A549 (cell line): ENCODE measurements at regions of chr2 and their contacts with region 1.

Region 1: DNA sequence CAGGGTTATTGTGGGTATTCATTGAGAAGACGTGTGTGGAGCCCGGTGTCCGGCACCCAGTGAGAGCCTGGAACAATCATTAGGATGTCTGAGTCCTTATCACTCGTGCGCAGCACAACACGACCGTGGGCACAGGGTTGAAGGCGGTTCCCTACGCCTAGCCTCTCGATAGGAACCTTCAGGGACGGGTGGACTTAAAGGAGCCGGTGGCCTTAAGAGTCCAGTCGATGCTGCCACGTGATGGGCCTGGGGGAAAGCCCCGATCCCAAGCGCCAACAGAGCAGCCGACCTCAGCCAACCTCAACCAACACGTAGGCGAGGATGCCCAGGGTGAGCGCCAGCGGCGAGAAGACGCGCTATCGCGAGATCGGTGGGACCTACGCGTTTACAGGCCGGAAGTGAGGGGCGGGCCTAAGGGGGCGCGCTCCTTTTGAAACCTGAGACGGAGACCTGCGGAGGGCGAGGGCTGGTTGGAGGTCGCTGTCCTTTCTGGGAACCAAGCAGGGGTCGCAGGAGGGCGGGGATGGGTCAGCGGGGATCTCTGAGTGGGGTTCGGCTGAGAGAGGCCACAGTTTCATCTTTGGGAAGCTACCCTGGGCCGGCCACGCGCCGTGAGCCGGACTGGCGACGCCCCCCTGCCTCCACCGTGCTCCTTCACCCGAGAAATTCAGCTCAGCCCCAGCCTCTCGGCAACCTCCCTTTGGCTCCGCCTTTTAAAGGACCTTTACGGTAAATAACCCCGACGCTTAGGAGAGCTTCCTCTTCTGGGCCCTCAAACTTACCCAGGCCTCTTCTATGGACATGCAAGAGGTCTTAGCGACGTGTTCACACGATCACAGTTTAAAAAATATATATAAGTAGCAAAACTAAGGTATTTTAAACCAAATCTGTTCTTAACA is 28.3 kb downstream of the WNT10A start:
- DNase-seq: peak; percentile 91 to 97
- ATAC-seq: peak; percentile 97 to 98
- H3K4me3 ChIP-seq: peak overlapping the region; percentile 51
- H3K27ac ChIP-seq: peak overlapping the region; percentile 67 to 88
- H3K4me1 ChIP-seq: 0 out of 3 replicates have a peak, but pooled peaks cover 3% of the 10 kb centered on the region
- CTCF ChIP-seq: no peak
- EP300 ChIP-seq: no peak
- POLR2A ChIP-seq: peak; percentile 86
- RAD21 ChIP-seq: no peak

Region 2: DNA sequence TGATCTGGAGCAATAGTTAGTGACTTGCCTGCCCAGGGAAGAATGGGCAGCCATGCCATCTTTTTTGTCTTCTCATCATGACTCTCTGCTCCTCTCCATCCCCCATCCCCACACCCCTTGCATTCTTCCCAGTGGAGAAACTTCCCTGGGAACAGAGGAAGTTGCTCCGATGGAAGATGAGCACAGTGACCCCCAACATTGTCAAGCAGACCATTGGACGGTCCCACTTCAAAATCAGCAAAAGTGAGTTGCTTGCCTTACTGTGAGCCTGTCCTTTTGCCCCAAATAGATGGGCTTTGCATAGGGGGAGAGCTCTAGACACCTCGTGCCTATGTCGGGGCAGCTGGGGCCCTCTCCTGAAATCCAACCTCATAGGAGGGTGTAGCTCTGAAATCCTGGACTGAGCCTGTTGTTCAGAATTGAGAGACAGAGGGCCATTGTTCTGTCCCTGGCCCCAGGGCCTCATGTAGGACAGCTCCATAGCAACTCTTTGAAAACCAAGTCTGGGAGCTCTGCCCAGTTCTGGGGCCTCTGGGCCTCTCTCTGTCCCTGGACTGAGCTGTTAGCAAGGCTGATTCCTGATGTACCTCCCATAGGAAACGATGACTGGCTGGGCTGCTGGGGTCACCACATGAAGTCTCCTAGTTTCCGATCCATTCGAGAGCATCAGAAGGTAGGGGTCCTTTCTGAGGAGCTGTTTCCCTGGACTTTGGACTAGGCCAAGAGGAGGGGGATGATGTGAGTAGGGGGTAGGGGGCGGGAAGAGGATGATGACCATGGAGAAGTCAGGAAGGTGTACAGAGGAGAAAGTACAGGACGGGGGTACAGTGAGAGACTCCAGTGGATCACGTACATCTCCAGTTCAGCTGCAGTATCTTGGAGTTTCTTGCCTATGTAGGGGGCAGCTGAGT is 163.2 kb before region 1 on chr2:
- CTCF ChIA-PET with region 1: no interaction called
- POLR2A ChIA-PET with region 1: no interaction called
- DNase-seq: no peak
- ATAC-seq: peak in 1 of 2 experiments; percentile 43; a peak in 3 of 6 replicates
- H3K4me3 ChIP-seq: no peak overlapping the region
- H3K27ac ChIP-seq: peak overlapping the region in 1 of 2 experiments; percentile 68; a peak in 3 of 6 replicates
- H3K4me1 ChIP-seq: peaks cover 5% of the 10 kb centered on the region; the same call in 1 of the 3 replicates
- CTCF ChIP-seq: no peak
- EP300 ChIP-seq: no peak
- POLR2A ChIP-seq: no peak
- RAD21 ChIP-seq: no peak

Region 3: GRCh38 chr2:218892693-218893348 is 16.1 kb before region 1 on chr2:
- CTCF ChIA-PET with region 1: interaction called, 665 read pairs
- POLR2A ChIA-PET with region 1: no interaction called
- DNase-seq: peak; percentile 63 to 64
- ATAC-seq: peak; percentile 64 to 78
- H3K4me3 ChIP-seq: peak overlapping the region; percentile 33
- H3K27ac ChIP-seq: peak overlapping the region; percentile 66 to 81; a peak in 5 of 6 replicates
- H3K4me1 ChIP-seq: peaks cover 33% of the 10 kb centered on the region
- CTCF ChIP-seq: peak; percentile 66
- EP300 ChIP-seq: no peak
- POLR2A ChIP-seq: no peak
- RAD21 ChIP-seq: no peak